Activated CD8-positive, alpha-beta memory T cell treated with anti-CD3 and anti-CD28 coated beads, Interleukin-2, amount 10 ng/mL, durations not matched to agents 7 days and 5 days (primary cell): ENCODE measurements at regions of chr15 and their contacts with region 1.

Region 1: DNA sequence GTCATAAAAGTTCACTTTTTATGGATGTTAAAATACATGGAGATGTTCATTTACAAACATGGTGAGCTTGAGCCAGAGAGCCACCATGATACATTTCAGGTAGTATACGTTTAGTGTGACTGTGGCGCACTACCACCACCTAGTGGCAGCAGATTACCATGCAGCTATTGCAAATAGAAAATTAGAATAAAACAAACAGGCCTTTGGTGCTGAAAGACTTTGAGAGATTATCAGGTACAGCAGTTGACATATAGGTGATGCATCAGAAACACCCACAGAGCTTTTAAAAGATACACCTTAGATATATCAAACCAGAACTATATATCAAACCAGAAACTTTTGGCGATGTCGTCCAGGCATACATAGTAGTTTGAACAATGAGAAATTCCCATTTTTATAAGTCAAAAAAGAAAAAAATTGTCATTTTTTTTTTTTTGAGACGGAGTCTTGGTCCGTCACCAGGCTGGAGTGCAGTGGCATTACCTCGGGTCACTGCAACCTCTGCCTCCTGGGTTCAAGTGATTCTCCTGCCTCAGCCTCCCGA is 42.0 kb upstream of the ICE2 start:
- DNase-seq: peak; percentile 88
- ATAC-seq: peak; percentile 78
- H3K4me3 Mint-ChIP-seq: peak overlapping the region; percentile 2
- H3K27ac Mint-ChIP-seq: peak overlapping the region; percentile 75
- H3K4me1 Mint-ChIP-seq: peaks cover 60% of the 10 kb centered on the region
- H3K27me3 Mint-ChIP-seq: no peaks in the 10 kb centered on the region

Region 2: GRCh38 chr15:60162241-60162967 is 358.5 kb before region 1 on chr15:
- CTCF ChIA-PET with region 1: no interaction called
- DNase-seq: no peak
- ATAC-seq: no peak
- H3K4me3 Mint-ChIP-seq: no peak overlapping the region
- H3K27ac Mint-ChIP-seq: no peak overlapping the region
- H3K4me1 Mint-ChIP-seq: peaks cover 4% of the 10 kb centered on the region
- H3K27me3 Mint-ChIP-seq: peaks cover 43% of the 10 kb centered on the region

Region 3: GRCh38 chr15:60358935-60359682 is 161.8 kb before region 1 on chr15:
- CTCF ChIA-PET with region 1: interaction called, 19 read pairs
- DNase-seq: no peak
- ATAC-seq: no peak
- H3K4me3 Mint-ChIP-seq: no peak overlapping the region
- H3K27ac Mint-ChIP-seq: no peak overlapping the region
- H3K4me1 Mint-ChIP-seq: peaks cover 26% of the 10 kb centered on the region
- H3K27me3 Mint-ChIP-seq: no peaks in the 10 kb centered on the region

Region 4: DNA sequence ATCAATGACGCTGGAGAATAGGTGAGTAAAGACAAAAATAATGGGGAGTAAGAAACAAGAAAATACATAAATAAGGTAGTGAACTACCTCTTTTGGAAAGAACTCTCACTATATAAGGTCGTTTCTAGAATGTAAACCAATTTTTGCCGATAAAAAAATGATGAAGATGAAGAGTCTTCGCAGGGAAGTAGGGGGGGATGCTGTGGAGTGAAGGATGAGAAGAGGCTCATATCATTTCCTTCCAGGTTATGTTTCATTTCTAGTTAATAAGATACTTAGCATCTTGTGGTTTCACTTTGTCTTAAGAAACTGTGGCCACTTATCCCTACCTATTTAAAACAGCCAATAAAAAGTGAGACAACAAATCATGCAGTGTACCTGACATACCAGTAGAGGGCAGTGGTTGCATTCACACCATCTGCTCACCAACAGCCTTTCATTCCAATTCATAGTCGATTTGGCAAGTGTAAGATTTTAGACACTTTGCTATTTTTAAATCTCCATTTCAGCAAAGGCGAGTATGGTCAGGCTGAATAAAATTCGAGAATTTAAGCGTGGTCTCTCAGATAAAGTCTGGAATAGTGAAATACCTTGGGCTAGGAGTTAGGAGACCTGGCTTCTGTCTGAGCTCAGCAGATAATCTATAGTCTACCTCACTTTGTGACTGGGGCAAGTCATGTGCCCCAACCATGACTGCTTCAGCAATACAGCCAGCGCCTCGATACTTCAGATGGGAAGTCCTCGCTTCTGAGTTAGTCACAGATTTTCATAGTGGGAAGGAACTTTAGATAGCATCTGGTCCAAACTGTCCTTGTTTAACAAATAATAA is 13.1 kb before region 1 on chr15:
- CTCF ChIA-PET with region 1: interaction called, 94 read pairs
- DNase-seq: peak; percentile 74
- ATAC-seq: peak; percentile 86
- H3K4me3 Mint-ChIP-seq: peak overlapping the region; percentile 48
- H3K27ac Mint-ChIP-seq: peak overlapping the region; percentile 82
- H3K4me1 Mint-ChIP-seq: peaks cover 56% of the 10 kb centered on the region
- H3K27me3 Mint-ChIP-seq: no peaks in the 10 kb centered on the region

Region 5: DNA sequence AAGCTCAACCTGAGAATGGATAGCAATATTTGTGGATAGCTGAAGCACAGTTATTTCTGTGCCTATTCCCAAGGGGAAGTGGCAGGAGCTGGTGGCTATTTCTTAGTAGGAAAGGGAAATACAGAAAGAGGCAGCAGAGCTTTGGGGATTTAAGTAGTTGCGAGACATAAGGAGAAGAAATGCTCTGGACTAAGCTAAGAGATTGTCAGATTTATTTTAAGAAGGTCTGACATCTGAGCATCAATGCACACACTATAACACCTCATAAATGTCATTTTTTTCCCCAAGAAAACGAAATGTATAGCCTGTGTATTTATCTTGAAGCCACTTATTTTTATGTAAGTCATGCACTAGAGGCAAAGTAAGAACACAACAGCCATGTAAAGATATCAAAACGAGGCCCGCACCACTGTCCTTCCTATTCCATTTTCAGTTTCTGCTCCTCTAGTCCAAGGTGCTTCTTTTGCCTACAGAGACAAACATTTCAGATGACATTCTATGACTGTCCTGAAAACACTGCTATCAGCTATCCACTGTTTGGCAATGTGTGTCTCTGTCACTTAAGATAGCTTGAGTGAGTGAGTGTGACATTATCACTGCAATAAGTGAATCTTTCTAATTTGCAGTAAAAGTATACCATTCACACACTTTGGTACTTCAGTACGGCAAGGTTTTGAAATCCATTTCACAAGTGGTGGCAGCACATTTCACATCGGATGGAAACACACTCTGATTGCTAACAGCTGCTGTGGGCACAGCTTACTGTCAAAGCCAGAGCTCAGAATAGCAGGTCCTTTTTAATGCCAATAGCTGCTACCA is 20.8 kb after region 1 on chr15:
- CTCF ChIA-PET with region 1: interaction called, 21 read pairs
- DNase-seq: no peak
- ATAC-seq: peak; percentile 52
- H3K4me3 Mint-ChIP-seq: peak overlapping the region; percentile 18
- H3K27ac Mint-ChIP-seq: peak overlapping the region; percentile 94
- H3K4me1 Mint-ChIP-seq: peaks cover 91% of the 10 kb centered on the region
- H3K27me3 Mint-ChIP-seq: no peaks in the 10 kb centered on the region

Region 6: DNA sequence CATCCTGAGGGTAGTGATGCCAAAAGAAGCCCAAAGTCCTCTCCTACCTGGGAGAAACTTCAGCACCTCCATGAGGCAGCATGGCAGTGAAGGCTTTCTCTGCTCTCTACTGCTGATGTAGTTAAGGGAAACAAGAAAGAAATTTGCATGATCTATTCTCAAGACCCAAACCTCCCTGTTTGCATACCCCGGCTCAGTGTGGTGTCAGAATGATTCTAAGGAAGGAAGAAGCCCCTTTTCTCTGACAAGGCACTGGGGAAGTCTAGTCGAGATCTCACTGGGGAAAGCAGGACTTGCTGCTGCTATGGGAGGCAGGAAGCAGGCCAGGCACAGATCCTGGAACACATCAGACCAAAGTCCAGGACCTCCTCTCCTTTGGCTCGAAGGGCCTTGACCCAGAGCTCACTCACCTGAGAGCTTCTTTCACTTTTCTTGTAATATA is 47.4 kb after region 1 on chr15:
- CTCF ChIA-PET with region 1: interaction called, 13 read pairs
- DNase-seq: no peak
- ATAC-seq: no peak
- H3K4me3 Mint-ChIP-seq: no peak overlapping the region
- H3K27ac Mint-ChIP-seq: peak overlapping the region; percentile 80
- H3K4me1 Mint-ChIP-seq: peaks cover 90% of the 10 kb centered on the region
- H3K27me3 Mint-ChIP-seq: no peaks in the 10 kb centered on the region

Region 7: DNA sequence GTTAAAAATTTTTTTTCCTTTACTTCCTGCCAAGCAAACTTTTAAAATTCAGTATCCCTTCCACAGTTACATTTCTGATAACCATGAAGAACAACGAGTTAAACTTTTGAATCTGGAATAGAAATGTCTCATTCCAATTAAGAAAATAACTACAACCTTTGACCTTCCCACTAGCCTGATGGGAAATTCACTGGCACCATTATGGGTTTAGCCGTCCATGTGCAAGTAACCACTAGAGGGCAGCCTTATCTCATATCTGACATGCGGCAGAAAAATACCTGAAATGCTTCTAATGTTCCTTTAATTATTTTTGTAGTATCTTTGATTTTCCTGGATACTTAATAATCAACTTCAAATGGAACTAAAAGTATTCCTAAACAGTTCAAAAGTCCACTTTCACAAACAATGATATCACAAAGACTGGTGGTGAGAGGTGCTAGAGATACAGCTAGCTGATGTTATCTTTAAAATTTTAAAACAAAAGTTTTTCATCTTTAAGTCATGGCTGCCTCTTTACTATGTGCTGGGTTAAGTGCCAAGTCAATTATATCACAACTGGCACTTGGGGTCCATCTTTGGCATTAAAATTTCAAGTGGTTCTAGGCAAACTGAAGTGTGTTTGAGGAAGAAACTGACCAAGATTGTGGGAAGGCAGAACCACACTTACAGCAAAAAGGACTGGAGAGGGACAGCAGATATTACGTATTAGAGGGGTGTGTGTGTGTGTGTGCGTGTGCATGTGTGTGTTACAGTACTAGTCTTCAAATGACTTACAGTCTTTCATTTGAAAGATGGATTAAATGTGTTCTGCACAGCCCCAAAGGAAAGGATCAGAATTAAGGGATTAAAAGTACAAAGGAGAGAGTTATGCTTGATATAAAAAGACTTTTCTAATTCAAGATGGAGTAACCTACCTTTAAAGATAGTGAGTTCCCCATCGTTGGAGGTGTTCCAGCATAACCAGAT is 65.1 kb after region 1 on chr15:
- CTCF ChIA-PET with region 1: interaction called, 28 read pairs
- DNase-seq: peak; percentile 79
- ATAC-seq: peak; percentile 22
- H3K4me3 Mint-ChIP-seq: peak overlapping the region; percentile 57
- H3K27ac Mint-ChIP-seq: peak overlapping the region; percentile 89
- H3K4me1 Mint-ChIP-seq: peaks cover 84% of the 10 kb centered on the region
- H3K27me3 Mint-ChIP-seq: peaks cover 2% of the 10 kb centered on the region

Region 8: DNA sequence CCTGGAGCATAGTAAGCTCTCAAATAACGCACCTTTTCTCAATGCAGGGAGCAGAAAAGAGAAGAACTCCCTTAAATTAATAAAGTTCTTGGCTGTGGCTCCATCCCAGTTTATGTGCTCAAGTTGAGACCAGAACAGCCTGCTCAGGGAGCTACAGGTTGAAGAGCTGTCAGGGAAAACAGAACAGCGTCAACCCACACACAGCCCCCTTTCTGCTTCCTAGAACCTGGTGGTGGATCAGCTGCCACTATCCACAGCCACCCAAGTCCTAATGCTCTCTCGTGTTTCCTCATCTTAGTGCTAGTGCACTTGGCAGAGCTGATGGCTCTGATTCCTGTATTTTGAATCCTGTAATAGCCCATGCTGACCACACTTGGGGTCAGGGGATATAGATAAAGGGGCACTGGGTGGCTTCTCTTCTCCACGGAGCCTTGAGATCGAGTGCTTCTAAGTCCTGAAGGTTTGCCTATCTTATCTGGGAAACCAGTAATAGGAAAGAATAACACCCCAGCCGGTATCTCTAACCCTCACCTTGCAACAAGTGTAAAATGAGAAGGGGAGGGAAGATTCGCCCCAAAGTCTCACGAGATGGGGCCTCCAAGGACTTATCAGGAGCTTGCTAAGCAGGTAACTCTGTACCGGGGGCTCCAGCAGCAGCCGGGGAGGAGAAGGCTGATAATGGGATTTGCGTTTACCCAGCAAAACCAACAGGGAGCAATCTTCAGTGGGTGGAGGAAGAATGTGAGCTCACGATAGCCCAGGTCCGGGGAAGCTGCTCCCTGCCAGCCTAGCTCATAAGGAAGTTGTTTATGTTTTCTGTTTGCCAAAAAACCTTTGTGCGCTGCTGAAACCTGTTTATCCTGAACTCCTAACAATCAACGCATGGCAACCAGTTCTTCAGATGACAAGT is 94.2 kb after region 1 on chr15:
- CTCF ChIA-PET with region 1: no interaction called
- DNase-seq: no peak
- ATAC-seq: no peak
- H3K4me3 Mint-ChIP-seq: no peak overlapping the region
- H3K27ac Mint-ChIP-seq: no peak overlapping the region
- H3K4me1 Mint-ChIP-seq: peaks cover 10% of the 10 kb centered on the region
- H3K27me3 Mint-ChIP-seq: peaks cover 40% of the 10 kb centered on the region

Region 9: DNA sequence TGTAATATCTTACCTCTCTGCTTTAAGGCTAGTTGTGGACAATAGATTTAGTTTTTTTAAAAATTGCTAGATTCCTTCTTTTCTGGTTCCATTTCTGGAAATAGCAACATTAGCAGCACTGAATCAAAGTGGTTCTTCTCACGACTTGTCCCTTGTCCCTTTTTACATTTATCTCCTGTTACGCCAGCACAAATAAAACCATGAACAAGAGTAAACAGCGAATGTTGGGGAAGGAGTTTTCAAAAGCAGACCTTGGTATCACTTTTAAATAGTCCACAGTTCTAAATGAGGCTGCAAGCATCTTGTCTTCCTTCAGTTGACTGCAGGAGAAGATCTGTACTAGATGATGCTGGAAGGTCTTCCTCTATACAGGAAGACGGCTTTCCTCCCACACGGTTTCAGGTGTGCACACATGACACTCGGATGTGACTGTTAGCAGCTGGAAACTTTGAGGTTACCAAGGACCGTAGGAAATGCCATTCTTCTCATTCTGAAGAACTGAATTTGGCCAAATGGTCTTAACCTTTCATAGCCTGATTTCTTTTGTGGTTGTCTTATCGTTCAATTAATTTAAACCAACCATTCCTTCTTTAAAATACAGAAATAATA is 209.1 kb after region 1 on chr15:
- CTCF ChIA-PET with region 1: no interaction called
- DNase-seq: no peak
- ATAC-seq: no peak
- H3K4me3 Mint-ChIP-seq: no peak overlapping the region
- H3K27ac Mint-ChIP-seq: no peak overlapping the region
- H3K4me1 Mint-ChIP-seq: peaks cover 11% of the 10 kb centered on the region
- H3K27me3 Mint-ChIP-seq: no peaks in the 10 kb centered on the region